Ascending aorta (tissue), 2 donors: ENCODE measurements at regions of chr6 and their contacts with region 1.

Region 1: GRCh38 chr6:122374307-122374706 is 25.1 kb upstream of the HSF2 start:
- DNase-seq: no peak
- H3K4me3 ChIP-seq: no peak overlapping the region
- H3K27ac ChIP-seq: no peak overlapping the region
- H3K4me1 ChIP-seq: no peaks in the 10 kb centered on the region
- H3K27me3 ChIP-seq: no peaks in the 10 kb centered on the region
- CTCF ChIP-seq: no peak

Region 2: GRCh38 chr6:122020588-122021264 is 353.6 kb before region 1 on chr6:
- intact Hi-C with region 1: no loop called
- DNase-seq: no peak
- H3K4me3 ChIP-seq: no peak overlapping the region
- H3K27ac ChIP-seq: no peak overlapping the region
- H3K4me1 ChIP-seq: no peaks in the 10 kb centered on the region
- H3K27me3 ChIP-seq: no peaks in the 10 kb centered on the region
- CTCF ChIP-seq: no peak

Region 3: DNA sequence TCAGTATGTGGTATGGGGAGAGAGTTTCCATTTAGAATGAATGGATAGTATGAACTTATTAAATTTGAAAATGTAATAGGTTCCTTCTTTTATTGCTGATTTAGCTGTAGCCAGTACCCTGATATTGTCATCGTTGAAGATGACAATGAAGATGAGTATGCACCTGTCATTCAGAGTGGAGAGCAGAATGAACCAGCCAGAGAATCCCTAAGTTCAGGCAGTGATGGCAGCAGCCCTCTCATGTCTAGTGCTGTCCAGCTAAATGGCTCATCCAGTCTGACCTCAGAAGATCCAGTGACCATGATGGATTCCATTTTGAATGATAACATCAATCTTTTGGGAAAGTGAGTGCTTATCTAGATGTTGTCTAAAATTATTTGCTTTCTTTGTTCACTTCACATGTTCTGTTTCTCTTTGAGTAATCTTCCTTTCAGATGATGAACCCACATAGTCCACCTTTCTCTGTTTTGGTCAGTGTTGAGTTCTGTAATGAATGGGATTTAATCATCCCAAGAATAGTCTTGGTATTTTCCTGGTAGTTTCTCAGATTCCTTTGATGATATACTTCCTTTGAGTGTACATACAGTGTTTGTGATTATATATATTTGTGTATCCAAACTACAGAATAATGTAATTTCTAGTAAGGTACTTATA is 48.4 kb after region 1 on chr6:
- intact Hi-C with region 1: loop called (anchors 2 kb)
- DNase-seq: no peak
- H3K4me3 ChIP-seq: no peak overlapping the region
- H3K27ac ChIP-seq: no peak overlapping the region
- H3K4me1 ChIP-seq: no peaks in the 10 kb centered on the region
- H3K27me3 ChIP-seq: no peaks in the 10 kb centered on the region
- CTCF ChIP-seq: no peak

Region 4: DNA sequence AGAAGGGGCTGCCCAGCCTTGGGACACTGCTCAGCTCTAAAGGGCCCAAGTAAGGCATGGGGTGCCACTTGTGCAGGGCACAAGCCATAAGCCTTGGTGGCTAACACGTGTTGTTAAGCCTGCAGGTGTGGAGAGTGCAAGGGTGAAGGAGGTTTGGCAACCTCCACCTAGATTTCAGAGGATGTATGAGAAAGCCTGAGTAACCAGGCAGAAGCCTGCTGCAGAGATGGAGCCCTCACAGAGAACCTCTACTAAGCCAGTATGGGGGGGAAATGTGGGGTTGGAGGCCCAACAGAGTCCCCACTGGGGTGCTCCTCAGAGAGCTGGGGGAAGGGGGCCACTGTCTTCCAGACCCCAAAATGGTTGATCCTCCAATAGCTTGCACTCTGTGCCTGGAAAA is 64.7 kb after region 1 on chr6:
- intact Hi-C with region 1: no loop called
- DNase-seq: no peak
- H3K4me3 ChIP-seq: no peak overlapping the region
- H3K27ac ChIP-seq: no peak overlapping the region
- H3K4me1 ChIP-seq: no peaks in the 10 kb centered on the region
- H3K27me3 ChIP-seq: no peaks in the 10 kb centered on the region
- CTCF ChIP-seq: no peak

Region 5: GRCh38 chr6:122653094-122653493 is 278.8 kb after region 1 on chr6:
- intact Hi-C with region 1: no loop called
- DNase-seq: no peak
- H3K4me3 ChIP-seq: no peak overlapping the region
- H3K27ac ChIP-seq: no peak overlapping the region
- H3K4me1 ChIP-seq: no peaks in the 10 kb centered on the region
- H3K27me3 ChIP-seq: no peaks in the 10 kb centered on the region
- CTCF ChIP-seq: no peak

Region 6: DNA sequence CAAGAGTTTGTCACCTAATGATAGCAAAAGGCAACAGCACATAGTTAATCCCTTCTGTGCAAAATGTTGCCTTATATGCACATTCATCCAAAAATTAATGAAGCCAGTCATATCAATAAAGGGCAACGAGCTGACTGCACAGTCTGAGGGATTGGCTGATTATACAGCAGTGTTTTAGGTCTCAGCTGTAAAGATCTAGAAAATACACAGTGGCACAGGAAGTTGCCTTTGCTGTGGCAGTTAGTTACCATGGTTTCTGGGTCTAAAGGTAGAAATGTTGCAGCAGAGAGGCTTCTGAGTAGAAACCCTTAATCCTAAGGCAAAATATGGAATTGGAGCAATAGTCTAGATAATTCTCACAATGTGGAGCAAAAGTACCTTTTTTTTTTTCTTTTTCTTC is 504.5 kb after region 1 on chr6:
- intact Hi-C with region 1: no loop called
- DNase-seq: no peak
- H3K4me3 ChIP-seq: no peak overlapping the region
- H3K27ac ChIP-seq: no peak overlapping the region
- H3K4me1 ChIP-seq: no peaks in the 10 kb centered on the region
- H3K27me3 ChIP-seq: no peaks in the 10 kb centered on the region
- CTCF ChIP-seq: no peak